ENCODE measurements at regions of chr15 and their contacts with region 1.

Region 1: GRCh38 chr15:80567721-80568157 is 127.4 kb upstream of the ABHD17C start:
- DNase-seq: peak; percentile 68
- H3K4me3 ChIP-seq: no peak overlapping the region
- H3K27ac ChIP-seq: no peak overlapping the region
- H3K4me1 ChIP-seq: no peaks in the 10 kb centered on the region
- H3K27me3 ChIP-seq: no peaks in the 10 kb centered on the region
- CTCF ChIP-seq: peak; percentile 83 to 94

Region 2: GRCh38 chr15:80480909-80481308 is 86.8 kb before region 1 on chr15:
- CTCF ChIA-PET with region 1: no interaction called
- dilution Hi-C with region 1: no loop called
- in situ Hi-C with region 1: no loop called
- intact Hi-C with region 1: no loop called
- DNase-seq: peak; percentile 26
- H3K4me3 ChIP-seq: no peak overlapping the region
- H3K27ac ChIP-seq: no peak overlapping the region
- H3K4me1 ChIP-seq: peaks cover 14% of the 10 kb centered on the region
- H3K27me3 ChIP-seq: no peaks in the 10 kb centered on the region
- CTCF ChIP-seq: no peak

Region 3: GRCh38 chr15:80580106-80580505 is 12.4 kb after region 1 on chr15:
- CTCF ChIA-PET with region 1: interaction called, 4 read pairs
- dilution Hi-C with region 1: no loop called
- in situ Hi-C with region 1: no loop called
- intact Hi-C with region 1: loop called (anchors 1 kb)
- DNase-seq: peak; percentile 100
- H3K4me3 ChIP-seq: no peak overlapping the region
- H3K27ac ChIP-seq: peak overlapping the region; percentile 87
- H3K4me1 ChIP-seq: peaks cover 43% of the 10 kb centered on the region
- H3K27me3 ChIP-seq: no peaks in the 10 kb centered on the region
- CTCF ChIP-seq: no peak

Region 4: GRCh38 chr15:80629355-80629754 is 61.6 kb after region 1 on chr15:
- CTCF ChIA-PET with region 1: no interaction called
- dilution Hi-C with region 1: loop called (anchors 5 kb)
- in situ Hi-C with region 1: no loop called
- intact Hi-C with region 1: no loop called
- DNase-seq: no peak
- H3K4me3 ChIP-seq: no peak overlapping the region
- H3K27ac ChIP-seq: no peak overlapping the region
- H3K4me1 ChIP-seq: no peaks in the 10 kb centered on the region
- H3K27me3 ChIP-seq: no peaks in the 10 kb centered on the region
- CTCF ChIP-seq: no peak

Region 5: DNA sequence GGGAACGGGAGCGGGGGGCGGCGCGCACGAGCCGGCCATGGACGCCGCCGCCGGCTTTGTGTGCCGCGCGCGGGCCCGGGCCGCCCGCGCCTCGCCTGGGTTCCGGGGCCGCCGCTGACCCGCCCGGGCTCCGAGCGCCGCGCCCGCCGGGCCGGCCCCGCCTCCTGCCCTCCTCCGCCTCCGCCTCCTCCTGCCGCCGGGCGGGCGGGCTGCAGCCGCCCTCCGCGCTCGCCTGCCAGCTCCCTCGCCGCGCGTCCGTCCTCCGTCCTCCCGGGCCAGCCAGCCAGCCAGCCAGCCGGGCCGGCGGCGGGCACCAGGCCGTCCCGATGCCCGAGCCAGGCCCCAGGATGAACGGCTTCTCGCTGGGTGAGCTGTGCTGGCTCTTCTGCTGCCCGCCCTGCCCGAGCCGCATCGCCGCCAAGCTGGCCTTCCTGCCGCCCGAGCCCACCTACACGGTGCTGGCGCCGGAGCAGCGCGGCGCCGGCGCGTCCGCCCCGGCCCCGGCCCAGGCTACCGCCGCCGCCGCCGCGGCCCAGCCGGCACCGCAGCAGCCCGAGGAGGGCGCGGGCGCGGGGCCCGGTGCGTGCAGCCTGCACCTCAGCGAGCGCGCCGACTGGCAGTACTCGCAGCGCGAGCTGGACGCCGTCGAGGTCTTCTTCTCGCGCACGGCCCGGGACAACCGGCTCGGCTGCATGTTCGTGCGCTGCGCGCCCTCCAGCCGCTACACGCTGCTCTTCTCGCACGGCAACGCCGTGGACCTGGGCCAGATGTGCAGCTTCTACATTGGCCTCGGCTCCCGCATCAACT is 127.6 kb after region 1 on chr15 and contains the start of gene ABHD17C:
- CTCF ChIA-PET with region 1: interaction called, 8 read pairs
- dilution Hi-C with region 1: no loop called
- in situ Hi-C with region 1: no loop called
- intact Hi-C with region 1: loop called (anchors 1 kb)
- DNase-seq: peak; percentile 70
- H3K4me3 ChIP-seq: peak within 1 kb of the TSS; percentile 89 to 95 (median 95)
- H3K27ac ChIP-seq: peak within 1 kb of the TSS; percentile 79
- H3K4me1 ChIP-seq: peaks cover 19% of the 10 kb centered on the region
- H3K27me3 ChIP-seq: no peaks in the 10 kb centered on the region
- CTCF ChIP-seq: no peak
- total RNA-seq, gene ABHD17C: 5.2 to 23.2 TPM

Region 6: GRCh38 chr15:81265944-81266775 is 698.4 kb after region 1 on chr15:
- CTCF ChIA-PET with region 1: interaction called, 4 read pairs
- dilution Hi-C with region 1: no loop called
- in situ Hi-C with region 1: loop called in 1 of 2 experiments (anchors 25 kb)
- intact Hi-C with region 1: loop called (anchors 5 kb)
- DNase-seq: peak; percentile 59
- H3K4me3 ChIP-seq: peak overlapping the region in 1 of 3 experiments; percentile 1
- H3K27ac ChIP-seq: no peak overlapping the region
- H3K4me1 ChIP-seq: peaks cover 5% of the 10 kb centered on the region
- H3K27me3 ChIP-seq: no peaks in the 10 kb centered on the region
- CTCF ChIP-seq: peak; percentile 95 to 96

Measured in mammary epithelial cell (primary cell).